GM12878 (cell line): ENCODE measurements at regions of chr1 and their contacts with region 1.

Region 1: GRCh38 chr1:235933017-235933765 is 66.5 kb upstream of the LYST start:
- DNase-seq: no peak
- ATAC-seq: peak; percentile 60
- H3K4me3 ChIP-seq: no peak overlapping the region
- H3K27ac ChIP-seq: no peak overlapping the region
- H3K4me1 ChIP-seq: peaks cover 23% of the 10 kb centered on the region
- H3K27me3 ChIP-seq: no peaks in the 10 kb centered on the region
- CTCF ChIP-seq: peak in 2 of 3 experiments; percentile 6; a peak in 1 of 6 replicates
- EP300 ChIP-seq: no peak
- POLR2A ChIP-seq: no peak
- RAD21 ChIP-seq: no peak

Region 2: DNA sequence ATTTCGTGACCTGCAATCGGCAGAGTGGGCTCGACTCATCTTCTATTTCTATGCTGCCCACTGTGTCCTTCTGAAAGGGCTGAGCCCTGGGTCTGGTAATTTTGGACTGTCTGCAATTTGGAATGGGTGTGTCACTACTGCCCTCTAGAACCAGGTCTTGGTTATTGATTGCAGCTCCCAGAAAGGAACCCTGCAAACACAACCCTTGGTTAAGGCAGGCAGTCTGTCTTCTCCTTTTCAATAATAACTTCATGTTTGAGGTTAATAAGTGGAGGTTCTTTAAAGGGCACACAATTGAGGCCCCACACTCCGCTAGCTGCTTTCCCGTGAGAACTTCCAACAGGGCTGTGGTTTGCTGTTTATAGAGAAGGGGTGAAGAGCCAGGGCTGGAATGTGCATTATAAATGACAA is 13.4 kb after region 1 on chr1:
- CTCF ChIA-PET with region 1: interaction called, 8 read pairs
- POLR2A ChIA-PET with region 1: interaction called, 6 read pairs
- RAD21 ChIA-PET with region 1: interaction called, 3 read pairs
- SMC1A ChIA-PET with region 1: interaction called, 15 read pairs
- in situ Hi-C with region 1: no loop called
- intact Hi-C with region 1: no loop called
- DNase-seq: no peak
- ATAC-seq: peak; percentile 86
- H3K4me3 ChIP-seq: no peak overlapping the region
- H3K27ac ChIP-seq: no peak overlapping the region
- H3K4me1 ChIP-seq: peaks cover 17% of the 10 kb centered on the region
- H3K27me3 ChIP-seq: no peaks in the 10 kb centered on the region
- CTCF ChIP-seq: peak; percentile 42 to 58 (median 55); a peak in 5 of 6 replicates
- EP300 ChIP-seq: no peak
- POLR2A ChIP-seq: no peak
- RAD21 ChIP-seq: peak; percentile 73